ENCODE measurements at regions of chr2 and their contacts with region 1.

Region 1: DNA sequence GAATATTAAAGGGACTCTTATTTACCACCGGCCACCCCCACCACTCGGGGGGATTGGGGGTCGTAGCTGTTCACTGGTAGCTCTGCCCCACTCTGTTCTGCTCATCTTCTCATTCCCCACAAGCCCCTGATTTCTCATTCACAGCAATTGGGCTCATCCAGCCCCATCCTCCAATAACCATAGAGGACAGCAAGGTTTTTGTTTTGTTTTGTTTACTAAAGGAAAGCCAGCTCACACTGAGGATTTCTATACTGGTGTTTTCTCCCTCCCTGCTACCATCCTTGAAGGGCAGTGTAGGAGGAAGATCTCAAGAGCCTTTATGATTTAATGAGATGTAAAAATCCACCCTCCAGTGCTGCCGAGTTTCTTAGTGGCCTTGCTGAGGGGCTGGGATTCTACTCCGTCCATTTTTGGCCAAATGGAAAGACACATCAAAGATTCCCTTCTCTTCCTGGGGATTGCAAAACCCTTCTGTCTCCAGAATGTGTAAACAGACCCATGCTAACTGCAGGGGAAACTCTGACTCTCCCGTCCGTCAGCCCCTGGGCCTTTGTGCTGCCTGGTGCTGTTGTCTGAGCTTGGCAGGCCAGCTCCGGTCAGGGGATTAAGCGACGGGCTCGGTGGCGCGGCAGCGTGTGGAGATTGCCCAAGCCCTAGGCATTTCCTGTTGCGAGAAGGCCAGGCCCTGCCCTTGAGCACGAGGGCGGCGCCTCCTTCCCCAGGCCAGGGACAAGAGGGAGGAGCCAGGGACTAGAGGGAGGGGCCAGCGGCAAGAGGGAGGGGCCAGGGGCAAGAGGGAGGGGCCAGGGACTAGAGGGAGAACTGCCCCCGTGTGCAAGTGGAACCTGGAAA is 165.0 kb downstream of the ANTXR1 start:
- DNase-seq: peak; percentile 96 to 97 (median 97)
- ATAC-seq: peak; percentile 96 to 98
- H3K4me3 ChIP-seq: no peak overlapping the region
- H3K27ac ChIP-seq: peak overlapping the region; percentile 54
- H3K4me1 ChIP-seq: peaks cover 3% of the 10 kb centered on the region
- H3K27me3 ChIP-seq: no peaks in the 10 kb centered on the region

Region 2: DNA sequence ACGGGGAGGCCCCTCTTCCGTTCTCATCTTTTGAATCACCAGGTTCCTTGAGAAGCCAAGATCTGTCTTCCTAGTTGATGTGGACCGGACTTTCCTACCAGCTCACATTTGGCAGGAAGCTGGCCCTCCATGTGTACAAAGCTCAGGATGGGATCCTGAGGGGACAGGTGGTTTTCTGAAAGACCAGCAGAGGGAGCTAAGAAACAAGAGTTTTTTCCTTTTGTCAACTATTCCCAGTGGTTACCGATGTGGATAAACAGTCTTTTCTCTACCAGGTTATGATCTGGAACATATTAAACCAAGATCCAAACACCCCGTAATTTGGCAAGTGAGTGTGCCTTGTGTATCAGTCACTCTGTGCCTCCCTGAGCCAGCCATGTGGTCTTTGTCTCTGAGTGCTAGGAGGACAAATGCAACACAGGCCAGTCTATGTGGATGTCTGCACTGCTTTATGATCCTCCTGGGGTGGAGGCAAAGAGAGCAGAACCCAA is 468.5 kb before region 1 on chr2:
- intact Hi-C with region 1: no loop called
- DNase-seq: no peak
- ATAC-seq: peak; percentile 71 to 84
- H3K4me3 ChIP-seq: no peak overlapping the region
- H3K27ac ChIP-seq: no peak overlapping the region
- H3K4me1 ChIP-seq: no peaks in the 10 kb centered on the region
- H3K27me3 ChIP-seq: no peaks in the 10 kb centered on the region

Region 3: DNA sequence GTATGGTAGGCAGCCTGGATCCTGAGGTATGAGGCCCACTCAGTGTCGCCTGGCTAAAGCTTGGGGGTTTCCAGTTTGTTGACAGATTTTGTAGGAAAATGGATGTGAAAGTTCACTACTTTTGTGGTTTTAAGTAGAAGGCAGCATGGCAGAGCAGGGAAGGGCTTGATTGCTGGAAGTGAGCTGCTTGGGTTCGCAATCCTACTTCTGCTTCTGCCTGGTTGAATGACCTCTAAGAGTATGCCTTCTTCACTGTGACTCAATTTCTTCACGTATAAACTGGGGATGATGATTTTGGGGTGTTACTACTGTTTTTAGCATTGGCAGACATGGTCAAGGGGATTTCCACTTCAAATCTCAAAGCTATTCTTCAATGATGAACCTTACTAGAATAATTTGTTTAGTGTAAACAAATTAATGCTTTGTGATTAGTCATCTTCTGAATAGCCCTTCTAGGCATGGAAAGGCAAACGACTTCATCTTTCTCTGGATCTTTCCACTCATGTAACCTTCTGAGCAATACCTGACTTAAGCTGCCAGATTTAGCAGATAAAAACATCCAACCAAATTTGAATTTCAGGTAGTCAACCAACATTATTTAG is 320.1 kb before region 1 on chr2:
- intact Hi-C with region 1: no loop called
- DNase-seq: no peak
- ATAC-seq: no peak
- H3K4me3 ChIP-seq: no peak overlapping the region
- H3K27ac ChIP-seq: no peak overlapping the region
- H3K4me1 ChIP-seq: no peaks in the 10 kb centered on the region
- H3K27me3 ChIP-seq: no peaks in the 10 kb centered on the region

Region 4: GRCh38 chr2:69061525-69061924 is 116.5 kb before region 1 on chr2:
- intact Hi-C with region 1: loop called in 1 of 4 experiments (anchors 10 kb)
- DNase-seq: no peak
- ATAC-seq: no peak
- H3K4me3 ChIP-seq: no peak overlapping the region
- H3K27ac ChIP-seq: no peak overlapping the region
- H3K4me1 ChIP-seq: no peaks in the 10 kb centered on the region
- H3K27me3 ChIP-seq: no peaks in the 10 kb centered on the region